Sigmoid colon (tissue), 7 donors: ENCODE measurements at regions of chr18 and their contacts with region 1.

Region 1: DNA sequence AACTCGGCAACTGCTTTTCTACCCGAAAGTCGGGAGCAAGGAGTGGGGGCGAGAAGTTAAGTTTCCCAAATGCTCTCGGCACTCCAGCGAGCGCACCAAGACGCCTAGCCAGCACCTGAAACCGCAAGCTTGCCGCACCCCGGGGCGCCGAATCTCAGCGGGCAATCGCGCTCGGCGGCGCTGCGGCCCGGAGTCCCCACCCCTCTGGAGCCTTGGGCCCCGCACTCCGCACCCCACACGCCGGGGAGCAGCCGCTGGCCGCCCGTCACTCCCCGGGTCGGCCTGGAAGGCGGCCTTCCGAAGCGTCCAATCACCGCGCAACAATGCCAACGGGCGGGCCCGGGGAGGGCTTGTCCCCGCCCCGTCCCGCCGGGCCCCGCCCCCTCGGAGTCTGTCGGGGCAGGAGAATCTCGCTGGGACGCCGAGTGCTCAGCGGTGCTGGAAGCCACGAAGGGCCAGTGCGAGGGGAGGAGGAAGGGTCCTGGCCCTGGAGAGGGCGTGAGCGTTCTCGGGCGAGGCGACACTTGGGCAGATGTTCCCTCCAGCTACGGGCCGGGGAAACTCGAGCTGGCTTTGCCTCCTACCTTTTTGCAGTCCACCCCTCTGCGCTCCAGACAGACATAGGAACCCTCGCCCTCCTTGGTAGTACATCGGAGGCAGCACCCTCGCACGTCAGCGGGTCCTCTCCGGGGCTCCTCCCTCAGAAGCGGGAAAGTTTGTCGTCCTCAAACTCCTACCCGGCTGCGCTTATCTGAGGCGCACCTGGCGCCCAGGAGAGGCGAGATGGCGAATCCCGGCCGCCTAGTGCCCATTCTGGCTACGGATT is 1.1 kb upstream of the ZBTB7C start:
- DNase-seq: peak; percentile 94
- H3K4me3 ChIP-seq: peak overlapping the region; percentile 65 to 80 (median 76)
- H3K27ac ChIP-seq: peak overlapping the region; percentile 55 to 93 (median 80)
- H3K4me1 ChIP-seq: peaks cover 0 to 21% (median 19%) of the 10 kb centered on the region in 4 donors
- H3K27me3 ChIP-seq: peaks cover 0 to 78% (median 23%) of the 10 kb centered on the region in 3 donors
- CTCF ChIP-seq: no peak
- EP300 ChIP-seq: no peak
- POLR2A ChIP-seq: no peak

Region 2: GRCh38 chr18:47883771-47884413 is 526.4 kb before region 1 on chr18:
- intact Hi-C with region 1: no loop called
- DNase-seq: no peak
- H3K4me3 ChIP-seq: no peak overlapping the region
- H3K27ac ChIP-seq: no peak overlapping the region
- H3K4me1 ChIP-seq: peaks cover 0 to 11% (median 10%) of the 10 kb centered on the region in 4 donors
- H3K27me3 ChIP-seq: no peaks in the 10 kb centered on the region
- CTCF ChIP-seq: no peak
- EP300 ChIP-seq: no peak
- POLR2A ChIP-seq: no peak

Region 3: DNA sequence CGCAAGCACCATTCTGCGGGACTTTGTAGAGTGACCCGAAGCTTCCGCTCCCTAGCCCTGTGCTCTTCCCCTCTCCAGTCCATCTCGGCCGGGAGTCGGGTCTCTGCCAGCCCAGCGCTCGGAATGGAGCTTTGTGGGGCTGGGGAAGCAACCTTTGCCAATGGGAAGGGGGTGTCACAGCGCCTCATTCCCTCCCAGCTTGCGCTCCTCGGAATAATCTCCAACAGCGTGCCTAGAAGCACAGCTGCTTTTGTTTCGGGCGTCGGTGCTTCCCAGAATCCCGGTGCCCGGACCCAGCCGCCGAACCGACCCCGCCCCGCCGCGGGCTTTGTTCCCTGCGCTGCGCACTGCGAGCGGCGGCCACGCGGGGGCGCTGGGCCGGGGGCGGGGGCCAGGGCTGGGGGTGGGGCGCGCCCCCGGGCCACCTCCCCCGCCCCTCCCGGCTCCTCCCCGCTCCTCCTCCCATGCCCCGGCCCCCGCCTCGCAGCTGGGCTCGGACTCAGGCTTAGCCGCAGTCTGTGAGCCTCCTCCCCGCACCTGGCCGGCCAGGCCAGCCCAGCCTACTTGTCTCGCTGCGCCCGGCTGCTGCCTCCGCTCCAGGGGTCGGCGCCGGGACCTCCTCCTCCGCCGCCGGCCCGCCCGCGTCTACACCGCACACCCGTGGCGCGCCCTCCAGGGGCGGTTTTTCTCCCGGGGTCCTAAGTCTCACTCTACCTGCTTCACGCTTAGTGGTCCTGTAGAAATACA is 402.2 kb before region 1 on chr18:
- intact Hi-C with region 1: loop called (anchors 10 kb)
- DNase-seq: peak; percentile 73
- H3K4me3 ChIP-seq: peak overlapping the region; percentile 38 to 63 (median 48)
- H3K27ac ChIP-seq: peak overlapping the region in 1 of 4 donors; percentile 49
- H3K4me1 ChIP-seq: peaks cover 0 to 15% (median 6%) of the 10 kb centered on the region in 4 donors
- H3K27me3 ChIP-seq: no peaks in the 10 kb centered on the region
- CTCF ChIP-seq: peak in 2 of 4 experiments; percentile 10 to 71
- EP300 ChIP-seq: no peak
- POLR2A ChIP-seq: no peak

Region 4: GRCh38 chr18:48161191-48161910 is 249.0 kb before region 1 on chr18:
- intact Hi-C with region 1: loop called (anchors 2 kb)
- DNase-seq: peak; percentile 91
- H3K4me3 ChIP-seq: peak overlapping the region; percentile 36 to 87 (median 70)
- H3K27ac ChIP-seq: peak overlapping the region; percentile 77 to 89 (median 84)
- H3K4me1 ChIP-seq: peaks cover 0 to 19% (median 9%) of the 10 kb centered on the region in 4 donors
- H3K27me3 ChIP-seq: no peaks in the 10 kb centered on the region
- CTCF ChIP-seq: no peak
- EP300 ChIP-seq: no peak
- POLR2A ChIP-seq: peak in 1 of 2 donors; percentile 13

Region 5: GRCh38 chr18:48178997-48179396 is 231.3 kb before region 1 on chr18:
- intact Hi-C with region 1: no loop called
- DNase-seq: peak; percentile 40
- H3K4me3 ChIP-seq: no peak overlapping the region
- H3K27ac ChIP-seq: no peak overlapping the region
- H3K4me1 ChIP-seq: no peaks in the 10 kb centered on the region
- H3K27me3 ChIP-seq: no peaks in the 10 kb centered on the region
- CTCF ChIP-seq: no peak
- EP300 ChIP-seq: no peak
- POLR2A ChIP-seq: no peak